Pancreas (tissue), 10 donors: ENCODE measurements at regions of chr1 and their contacts with region 1.

Region 1: GRCh38 chr1:154206196-154206595 is at the start of gene CFAP141:
- DNase-seq: no peak
- ATAC-seq: peak in 3 of 4 donors; percentile 32 to 57 (median 49)
- H3K4me3 ChIP-seq: no peak within 1 kb of the TSS
- H3K27ac ChIP-seq: no peak within 1 kb of the TSS
- H3K4me1 ChIP-seq: no peaks in the 10 kb centered on the region
- H3K27me3 ChIP-seq: no peaks in the 10 kb centered on the region
- CTCF ChIP-seq: no peak
- total RNA-seq, gene CFAP141: not detected

Region 2: DNA sequence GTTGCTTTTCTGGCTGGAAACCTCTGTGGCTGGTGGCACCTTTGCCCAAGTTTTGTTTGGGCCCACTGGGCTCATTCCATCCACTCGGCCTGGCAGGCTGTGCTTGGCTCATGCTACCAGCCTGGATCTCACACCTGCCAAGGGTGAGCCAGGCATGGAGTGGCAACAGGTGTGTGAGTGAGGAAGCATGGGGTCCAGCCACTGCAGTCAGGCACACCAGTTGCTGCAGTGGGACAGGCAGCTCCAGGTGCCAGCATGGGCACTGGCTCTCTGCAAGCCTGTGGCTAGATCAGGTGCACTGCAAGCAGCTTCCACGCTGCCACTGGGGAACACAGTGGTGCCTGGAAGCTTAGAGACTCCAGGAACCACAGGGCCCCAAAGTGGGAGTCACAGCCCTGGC is 108.3 kb before region 1 on chr1:
- intact Hi-C with region 1: no loop called
- DNase-seq: peak in 1 of 6 donors; percentile 26
- ATAC-seq: no peak
- H3K4me3 ChIP-seq: no peak overlapping the region
- H3K27ac ChIP-seq: no peak overlapping the region
- H3K4me1 ChIP-seq: no peaks in the 10 kb centered on the region
- H3K27me3 ChIP-seq: no peaks in the 10 kb centered on the region
- CTCF ChIP-seq: no peak

Region 3: GRCh38 chr1:154145986-154146385 is 60.2 kb before region 1 on chr1:
- intact Hi-C with region 1: no loop called
- DNase-seq: no peak
- ATAC-seq: no peak
- H3K4me3 ChIP-seq: no peak overlapping the region
- H3K27ac ChIP-seq: no peak overlapping the region
- H3K4me1 ChIP-seq: no peaks in the 10 kb centered on the region
- H3K27me3 ChIP-seq: no peaks in the 10 kb centered on the region
- CTCF ChIP-seq: peak in 2 of 4 donors; percentile 9 to 28

Region 4: DNA sequence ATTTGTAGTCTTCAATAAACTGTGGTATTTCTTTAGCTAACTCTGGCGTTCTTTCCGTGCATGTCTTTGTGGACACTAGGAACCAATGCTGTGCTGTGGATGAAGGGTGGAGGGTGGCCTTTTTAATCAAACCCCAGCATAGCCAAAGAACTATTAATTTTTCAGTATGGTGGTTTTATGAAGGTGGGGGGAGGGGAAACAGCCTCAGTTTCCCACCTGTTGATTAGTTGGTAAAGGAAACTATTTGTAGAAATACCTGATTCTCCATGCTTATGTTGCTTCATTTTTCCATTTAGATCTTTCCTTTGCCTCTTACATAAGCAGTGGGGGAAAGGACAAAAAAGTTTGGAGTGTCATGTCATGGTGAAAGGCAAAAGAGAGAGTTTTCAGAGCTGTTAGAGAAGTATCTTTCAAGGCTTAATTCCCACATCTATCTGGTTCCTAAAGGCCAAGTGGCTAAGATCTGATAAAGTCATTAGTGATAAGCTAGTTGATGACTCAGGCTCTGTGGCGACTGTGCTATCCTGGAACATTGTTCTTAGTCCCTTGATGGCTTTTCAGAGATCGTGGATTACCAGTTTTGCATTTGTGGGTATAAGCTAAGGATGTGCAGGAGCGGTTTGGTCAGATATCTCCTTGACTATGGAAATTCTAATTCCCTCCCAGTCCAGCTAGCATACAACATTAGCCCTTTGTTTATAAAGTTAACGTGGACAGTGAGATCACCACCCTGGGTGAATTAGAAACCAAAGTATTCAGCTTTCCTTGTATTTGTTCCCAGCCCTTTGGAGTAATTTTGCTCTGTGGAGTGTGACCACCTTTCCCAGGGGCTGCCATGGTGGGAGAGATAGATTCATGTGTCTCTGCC is 57.5 kb after region 1 on chr1:
- intact Hi-C with region 1: loop called in 1 of 3 experiments (anchors 10 kb)
- DNase-seq: no peak
- ATAC-seq: no peak
- H3K4me3 ChIP-seq: no peak overlapping the region
- H3K27ac ChIP-seq: no peak overlapping the region
- H3K4me1 ChIP-seq: no peaks in the 10 kb centered on the region
- H3K27me3 ChIP-seq: no peaks in the 10 kb centered on the region
- CTCF ChIP-seq: no peak